Activated CD4-positive, alpha-beta T cell treated with anti-CD3 and anti-CD28 coated beads, Interleukin-2, amount 10 ng/mL, durations not matched to agents 24 days and 14 days (primary cell): ENCODE measurements at regions of chr14 and their contacts with region 1.

Region 1: DNA sequence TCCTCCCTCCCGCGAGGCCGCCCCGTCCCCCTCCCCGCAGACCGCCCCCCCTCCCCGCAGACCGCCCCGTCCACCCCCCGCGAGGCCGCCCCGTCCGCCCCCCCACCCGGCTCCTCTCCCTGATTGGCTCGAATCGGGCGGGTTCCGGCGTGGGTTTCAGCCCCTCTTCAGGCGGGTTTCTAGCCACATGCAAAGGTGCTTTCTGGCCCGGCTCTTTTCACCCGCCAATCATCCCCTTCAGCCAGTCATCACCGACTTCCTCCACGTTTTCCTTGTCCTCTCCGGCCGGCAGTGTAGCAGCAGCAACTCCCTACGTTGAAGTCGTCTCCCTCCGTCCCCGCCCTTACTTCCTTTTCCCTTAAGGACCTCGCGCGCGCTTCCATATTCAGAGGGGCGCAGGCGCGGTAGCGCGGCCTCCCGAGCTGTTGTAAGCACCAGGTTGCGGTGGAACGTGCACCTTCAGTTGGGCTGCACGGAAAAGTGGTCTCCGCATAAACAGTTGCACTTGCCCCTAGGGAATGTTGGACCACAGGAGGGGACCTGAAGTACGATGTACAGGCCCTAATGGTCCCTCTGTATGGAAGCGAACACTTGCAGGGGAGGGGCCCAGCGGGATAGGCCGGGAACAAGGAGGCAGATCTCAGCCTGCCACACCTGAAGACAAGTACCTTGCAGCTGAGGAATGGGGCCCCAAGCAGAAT is 44.6 kb upstream of the ESR2 start:
- DNase-seq: peak; percentile 96
- H3K4me3 Mint-ChIP-seq: peak overlapping the region; percentile 96
- H3K27ac Mint-ChIP-seq: peak overlapping the region; percentile 92
- H3K4me1 Mint-ChIP-seq: peaks cover 23% of the 10 kb centered on the region
- H3K27me3 Mint-ChIP-seq: no peaks in the 10 kb centered on the region

Region 2: DNA sequence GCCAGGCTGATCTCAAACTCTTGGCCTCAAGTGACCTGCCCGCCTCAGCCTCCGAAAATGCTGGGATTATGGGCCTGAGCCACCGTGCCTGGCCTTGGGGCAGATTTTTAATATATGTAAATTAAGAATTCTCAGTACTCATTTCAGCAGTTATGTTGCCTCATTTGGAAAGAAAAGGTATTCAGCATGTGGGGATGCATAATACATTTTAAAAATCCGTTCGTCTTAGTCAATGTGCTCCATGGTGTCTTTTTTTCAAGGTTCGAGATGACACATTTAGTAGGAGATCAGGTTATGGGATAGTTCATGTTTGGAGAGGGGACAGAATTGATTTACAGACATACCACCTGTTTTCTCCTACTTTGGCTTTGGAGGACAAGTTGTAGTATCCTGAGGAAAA is 475.8 kb before region 1 on chr14:
- intact Hi-C with region 1: loop called (anchors 5 kb)
- DNase-seq: no peak
- H3K4me3 Mint-ChIP-seq: peak overlapping the region; percentile 40
- H3K27ac Mint-ChIP-seq: peak overlapping the region; percentile 78
- H3K4me1 Mint-ChIP-seq: peaks cover 41% of the 10 kb centered on the region
- H3K27me3 Mint-ChIP-seq: peaks cover 1% of the 10 kb centered on the region

Region 3: GRCh38 chr14:63949696-63950095 is 389.1 kb before region 1 on chr14:
- intact Hi-C with region 1: no loop called
- DNase-seq: no peak
- H3K4me3 Mint-ChIP-seq: no peak overlapping the region
- H3K27ac Mint-ChIP-seq: no peak overlapping the region
- H3K4me1 Mint-ChIP-seq: peaks cover 8% of the 10 kb centered on the region
- H3K27me3 Mint-ChIP-seq: no peaks in the 10 kb centered on the region

Region 4: GRCh38 chr14:64147126-64147790 is 191.5 kb before region 1 on chr14:
- intact Hi-C with region 1: no loop called
- DNase-seq: no peak
- H3K4me3 Mint-ChIP-seq: no peak overlapping the region
- H3K27ac Mint-ChIP-seq: no peak overlapping the region
- H3K4me1 Mint-ChIP-seq: no peaks in the 10 kb centered on the region
- H3K27me3 Mint-ChIP-seq: no peaks in the 10 kb centered on the region

Region 5: DNA sequence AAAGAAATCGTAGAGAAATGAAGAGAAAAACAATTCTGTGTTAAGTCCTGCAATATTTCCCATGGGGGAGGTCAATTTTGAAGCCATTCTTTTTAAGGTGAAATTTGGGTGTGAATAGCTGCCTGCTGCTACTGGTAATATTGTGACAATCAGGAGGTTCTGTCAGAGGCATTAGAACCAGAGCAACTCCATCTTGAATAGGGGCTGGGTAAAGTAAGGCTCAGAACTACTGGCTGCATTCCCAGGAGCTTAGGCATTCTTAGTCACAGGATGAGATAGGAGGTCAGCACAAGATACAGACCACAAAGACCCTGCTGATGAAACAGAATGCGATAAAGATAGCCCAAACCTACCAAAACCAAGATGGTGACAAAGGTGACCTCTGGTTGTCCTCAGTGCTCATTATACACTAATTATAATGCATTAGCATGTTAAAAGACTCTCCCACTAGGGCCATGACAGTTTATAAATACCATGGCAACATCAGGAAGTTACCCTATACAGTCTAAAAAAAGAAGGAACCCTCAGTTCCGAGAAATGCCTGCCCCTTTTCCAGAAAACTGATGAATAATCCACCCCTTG is 24.6 kb after region 1 on chr14:
- intact Hi-C with region 1: no loop called
- DNase-seq: no peak
- H3K4me3 Mint-ChIP-seq: no peak overlapping the region
- H3K27ac Mint-ChIP-seq: no peak overlapping the region
- H3K4me1 Mint-ChIP-seq: no peaks in the 10 kb centered on the region
- H3K27me3 Mint-ChIP-seq: peaks cover 2% of the 10 kb centered on the region

Region 6: DNA sequence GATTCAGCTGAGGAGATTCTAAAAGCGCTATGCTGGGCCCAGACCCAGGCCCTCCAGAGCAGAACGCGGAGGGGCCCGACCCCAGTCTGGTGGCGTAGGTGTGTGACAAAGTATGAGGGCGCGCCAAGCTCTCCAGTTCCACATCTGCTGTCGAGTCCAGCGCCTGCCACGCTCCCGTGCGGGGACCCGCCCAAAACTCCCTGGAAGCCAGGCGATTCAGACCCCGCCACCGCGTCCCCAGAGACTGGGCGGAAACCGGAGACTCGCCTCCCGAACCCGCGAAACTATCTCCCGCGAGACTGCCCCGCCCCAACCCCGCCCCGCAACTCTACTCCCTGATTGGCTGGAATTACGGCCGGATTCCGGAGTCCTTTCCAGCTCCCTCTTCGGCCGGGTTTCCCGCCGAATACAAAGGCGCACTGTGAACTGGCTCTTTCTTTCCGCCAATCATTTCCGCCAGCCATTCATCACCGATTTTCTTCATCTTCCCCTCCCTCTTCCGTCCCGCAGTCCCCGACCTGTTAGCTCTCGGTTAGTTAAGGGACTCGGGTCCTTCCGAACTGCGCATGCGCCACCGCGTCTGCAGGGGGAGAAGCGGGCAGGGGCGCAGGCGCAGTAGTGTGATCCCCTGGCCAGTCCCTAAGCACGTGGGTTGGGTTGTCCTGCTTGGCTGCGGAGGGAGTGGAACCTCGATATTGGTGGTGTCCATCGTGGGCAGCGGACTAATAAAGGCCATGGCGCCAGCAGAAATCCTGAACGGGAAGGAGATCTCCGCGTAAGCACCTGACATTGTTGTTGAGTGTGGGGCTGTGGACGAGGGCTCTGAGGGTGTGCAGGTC is 49.1 kb after region 1 on chr14 and contains the start of gene MTHFD1:
- intact Hi-C with region 1: loop called (anchors 1 kb)
- DNase-seq: peak; percentile 99
- H3K4me3 Mint-ChIP-seq: peak within 1 kb of the TSS; percentile 99
- H3K27ac Mint-ChIP-seq: peak within 1 kb of the TSS; percentile 94
- H3K4me1 Mint-ChIP-seq: peaks cover 40% of the 10 kb centered on the region
- H3K27me3 Mint-ChIP-seq: peaks cover 2% of the 10 kb centered on the region
- total RNA-seq, gene MTHFD1: 246 and 249 TPM in 2 replicates

Region 7: DNA sequence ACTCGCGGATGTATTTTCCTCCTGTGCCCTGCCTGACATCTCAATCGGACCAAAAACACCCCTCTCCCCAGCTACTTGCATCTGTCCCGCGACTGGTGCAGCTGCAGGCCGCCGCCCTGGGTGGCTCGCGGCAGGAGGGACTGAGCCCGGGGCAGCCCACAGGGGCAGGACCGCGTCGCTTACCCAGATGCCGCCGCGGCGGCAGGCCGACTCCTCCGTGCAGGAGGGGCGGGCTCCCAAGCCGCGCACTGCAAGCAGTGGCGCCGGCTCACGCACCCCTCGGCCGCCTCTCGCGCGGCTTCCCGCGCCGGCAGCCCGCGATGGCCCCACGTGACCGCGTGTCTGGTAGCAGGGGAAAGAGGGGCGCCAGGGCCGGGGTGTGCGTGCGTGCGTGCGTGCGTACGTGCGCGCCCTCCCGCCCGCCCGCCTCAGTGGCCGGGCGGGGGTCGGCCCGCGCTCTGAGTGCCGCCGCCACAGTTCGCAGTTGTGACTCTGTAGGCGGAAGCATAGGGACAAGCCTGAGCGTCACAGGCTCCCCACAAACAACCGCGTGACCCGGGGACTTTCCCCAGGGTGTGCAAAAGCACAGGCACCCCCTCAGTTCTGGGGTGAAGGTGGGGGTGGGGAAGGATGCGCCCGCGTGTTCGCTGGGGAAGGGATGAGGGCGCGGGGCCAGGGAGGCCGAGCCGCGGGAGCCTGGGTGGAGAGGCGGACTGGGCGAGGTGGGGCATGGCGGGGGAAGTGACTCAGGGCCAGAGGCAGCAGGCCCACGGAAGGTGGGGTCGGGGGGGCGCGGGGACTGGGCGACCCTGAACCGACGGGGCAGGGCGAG is 164.9 kb after region 1 on chr14 and contains the start of gene ZBTB25:
- intact Hi-C with region 1: loop called (anchors 1 kb)
- DNase-seq: peak; percentile 99
- H3K4me3 Mint-ChIP-seq: peak within 1 kb of the TSS; percentile 94
- H3K27ac Mint-ChIP-seq: peak within 1 kb of the TSS; percentile 100
- H3K4me1 Mint-ChIP-seq: peaks cover 56% of the 10 kb centered on the region
- H3K27me3 Mint-ChIP-seq: peaks cover 1% of the 10 kb centered on the region
- total RNA-seq, gene ZBTB25: 21.8 and 22.2 TPM in 2 replicates

Region 8: DNA sequence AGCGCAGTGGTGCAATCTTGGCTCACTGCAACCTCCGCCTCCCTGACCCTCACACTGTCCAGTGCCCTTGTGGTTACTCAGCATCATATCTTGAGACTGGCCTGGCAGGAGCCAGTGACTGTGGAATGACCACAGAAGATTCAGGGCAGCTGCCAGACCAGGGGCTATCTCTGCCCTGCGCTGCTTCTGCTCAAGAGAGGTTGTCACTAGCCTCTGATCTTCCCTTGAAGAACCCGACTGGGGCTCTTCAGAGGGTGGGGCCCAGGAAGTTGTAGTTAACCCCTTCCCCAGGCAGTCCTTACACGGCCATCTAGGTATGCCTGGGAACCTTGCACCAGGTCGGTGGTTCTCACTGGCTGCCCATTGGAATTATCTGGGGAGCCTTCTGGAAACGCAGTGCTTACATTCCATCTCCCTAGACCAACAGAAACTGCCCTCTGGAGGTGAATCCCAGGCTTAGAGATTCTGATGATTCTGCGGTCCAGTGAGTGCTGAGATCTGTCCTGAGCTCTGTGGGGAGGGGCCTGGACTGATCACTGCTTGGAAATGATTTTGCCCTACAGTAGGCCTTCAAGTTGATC is 406.8 kb after region 1 on chr14:
- intact Hi-C with region 1: no loop called
- DNase-seq: no peak
- H3K4me3 Mint-ChIP-seq: no peak overlapping the region
- H3K27ac Mint-ChIP-seq: no peak overlapping the region
- H3K4me1 Mint-ChIP-seq: peaks cover 9% of the 10 kb centered on the region
- H3K27me3 Mint-ChIP-seq: no peaks in the 10 kb centered on the region

Region 9: GRCh38 chr14:64764641-64765520 is 426.1 kb after region 1 on chr14:
- intact Hi-C with region 1: loop called (anchors 10 kb)
- DNase-seq: peak; percentile 92
- H3K4me3 Mint-ChIP-seq: peak overlapping the region; percentile 37
- H3K27ac Mint-ChIP-seq: no peak overlapping the region
- H3K4me1 Mint-ChIP-seq: peaks cover 38% of the 10 kb centered on the region
- H3K27me3 Mint-ChIP-seq: peaks cover 17% of the 10 kb centered on the region